Activated naive CD4-positive, alpha-beta T cell treated with anti-CD3 and anti-CD28 coated beads, Interleukin-2, amount 10 ng/mL, durations not matched to agents 7 days and 5 days (primary cell): ENCODE measurements at regions of chr11 and their contacts with region 1.

Region 1: GRCh38 chr11:72598906-72599305 is 75.3 kb downstream of the PDE2A start:
- DNase-seq: no peak
- H3K4me3 Mint-ChIP-seq: no peak overlapping the region
- H3K27ac Mint-ChIP-seq: no peak overlapping the region
- H3K4me1 Mint-ChIP-seq: no peaks in the 10 kb centered on the region
- H3K27me3 Mint-ChIP-seq: peaks cover 76% of the 10 kb centered on the region

Region 2: GRCh38 chr11:72609045-72609444 is 10.1 kb after region 1 on chr11:
- CTCF ChIA-PET with region 1: interaction called, 10 read pairs
- DNase-seq: no peak
- H3K4me3 Mint-ChIP-seq: no peak overlapping the region
- H3K27ac Mint-ChIP-seq: no peak overlapping the region
- H3K4me1 Mint-ChIP-seq: peaks cover 17% of the 10 kb centered on the region
- H3K27me3 Mint-ChIP-seq: peaks cover 94% of the 10 kb centered on the region